Mammary epithelial cell (primary cell): ENCODE measurements at regions of chr9 and their contacts with region 1.

Region 1: GRCh38 chr9:12813960-12814876 is 39.4 kb downstream of the LURAP1L start:
- DNase-seq: peak; percentile 99
- H3K4me3 ChIP-seq: peak overlapping the region; percentile 48 to 67 (median 50)
- H3K27ac ChIP-seq: peak overlapping the region; percentile 100
- H3K4me1 ChIP-seq: peaks cover 58% of the 10 kb centered on the region
- H3K27me3 ChIP-seq: no peaks in the 10 kb centered on the region
- CTCF ChIP-seq: peak in 1 of 2 donors; percentile 39

Region 2: GRCh38 chr9:12732971-12733370 is 81.2 kb before region 1 on chr9:
- CTCF ChIA-PET with region 1: no interaction called
- dilution Hi-C with region 1: no loop called
- in situ Hi-C with region 1: no loop called
- intact Hi-C with region 1: no loop called
- DNase-seq: no peak
- H3K4me3 ChIP-seq: no peak overlapping the region
- H3K27ac ChIP-seq: no peak overlapping the region
- H3K4me1 ChIP-seq: no peaks in the 10 kb centered on the region
- H3K27me3 ChIP-seq: no peaks in the 10 kb centered on the region
- CTCF ChIP-seq: no peak

Region 3: DNA sequence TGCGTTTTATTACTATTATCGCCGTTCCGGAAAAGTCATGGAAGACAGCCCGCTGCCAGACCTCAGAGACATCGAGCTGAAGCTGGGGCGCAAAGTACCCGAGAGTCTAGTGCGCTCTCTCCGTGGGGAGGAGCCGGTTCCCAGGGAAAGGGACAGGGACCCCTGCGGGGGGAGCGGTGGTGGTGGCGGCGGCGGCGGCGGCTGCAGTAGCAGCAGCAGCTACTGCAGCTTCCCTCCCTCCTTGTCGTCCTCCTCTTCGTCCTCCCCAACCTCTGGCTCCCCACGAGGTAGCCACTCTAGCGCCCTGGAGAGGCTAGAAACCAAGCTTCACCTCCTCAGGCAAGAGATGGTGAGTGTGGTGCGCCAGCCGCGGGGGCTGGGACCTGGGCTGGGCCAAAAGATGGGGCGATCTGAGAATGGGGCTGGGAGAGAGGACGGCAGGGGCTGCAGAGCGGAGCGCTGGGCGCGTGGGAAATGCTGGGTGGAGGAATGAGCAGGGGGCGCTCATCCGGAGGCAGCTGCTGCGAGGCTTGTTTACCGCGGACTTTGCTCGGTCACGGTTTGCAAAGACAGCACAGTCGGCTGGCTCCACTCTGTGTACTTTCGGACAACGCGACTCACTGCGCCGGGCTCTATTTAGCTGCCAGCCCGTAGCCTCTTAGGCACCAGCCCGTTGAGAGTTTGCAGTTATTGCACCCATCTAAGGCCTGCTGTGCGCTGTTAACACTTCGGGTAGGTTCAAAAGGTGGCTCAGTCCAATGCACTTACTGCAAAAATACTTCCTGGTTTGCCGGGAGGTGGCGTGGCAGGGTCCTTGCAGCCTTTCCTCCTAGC is 38.3 kb before region 1 on chr9:
- CTCF ChIA-PET with region 1: interaction called, 4 read pairs
- dilution Hi-C with region 1: no loop called
- in situ Hi-C with region 1: loop called (anchors 5 kb)
- intact Hi-C with region 1: loop called (anchors 1 kb)
- DNase-seq: peak; percentile 88
- H3K4me3 ChIP-seq: peak overlapping the region; percentile 74 to 87 (median 84)
- H3K27ac ChIP-seq: peak overlapping the region; percentile 89
- H3K4me1 ChIP-seq: peaks cover 15% of the 10 kb centered on the region
- H3K27me3 ChIP-seq: no peaks in the 10 kb centered on the region
- CTCF ChIP-seq: peak; percentile 32 to 63

Region 4: GRCh38 chr9:12849486-12850004 is 35.3 kb after region 1 on chr9:
- CTCF ChIA-PET with region 1: no interaction called
- dilution Hi-C with region 1: loop called (anchors 5 kb)
- in situ Hi-C with region 1: no loop called
- intact Hi-C with region 1: no loop called
- DNase-seq: no peak
- H3K4me3 ChIP-seq: no peak overlapping the region
- H3K27ac ChIP-seq: no peak overlapping the region
- H3K4me1 ChIP-seq: peaks cover 11% of the 10 kb centered on the region
- H3K27me3 ChIP-seq: no peaks in the 10 kb centered on the region
- CTCF ChIP-seq: no peak

Region 5: GRCh38 chr9:12884737-12885414 is 70.7 kb after region 1 on chr9:
- CTCF ChIA-PET with region 1: no interaction called
- dilution Hi-C with region 1: no loop called
- in situ Hi-C with region 1: no loop called
- intact Hi-C with region 1: loop called (anchors 2 kb)
- DNase-seq: peak; percentile 77
- H3K4me3 ChIP-seq: no peak overlapping the region
- H3K27ac ChIP-seq: no peak overlapping the region
- H3K4me1 ChIP-seq: no peaks in the 10 kb centered on the region
- H3K27me3 ChIP-seq: no peaks in the 10 kb centered on the region
- CTCF ChIP-seq: peak; percentile 61 to 71

Region 6: DNA sequence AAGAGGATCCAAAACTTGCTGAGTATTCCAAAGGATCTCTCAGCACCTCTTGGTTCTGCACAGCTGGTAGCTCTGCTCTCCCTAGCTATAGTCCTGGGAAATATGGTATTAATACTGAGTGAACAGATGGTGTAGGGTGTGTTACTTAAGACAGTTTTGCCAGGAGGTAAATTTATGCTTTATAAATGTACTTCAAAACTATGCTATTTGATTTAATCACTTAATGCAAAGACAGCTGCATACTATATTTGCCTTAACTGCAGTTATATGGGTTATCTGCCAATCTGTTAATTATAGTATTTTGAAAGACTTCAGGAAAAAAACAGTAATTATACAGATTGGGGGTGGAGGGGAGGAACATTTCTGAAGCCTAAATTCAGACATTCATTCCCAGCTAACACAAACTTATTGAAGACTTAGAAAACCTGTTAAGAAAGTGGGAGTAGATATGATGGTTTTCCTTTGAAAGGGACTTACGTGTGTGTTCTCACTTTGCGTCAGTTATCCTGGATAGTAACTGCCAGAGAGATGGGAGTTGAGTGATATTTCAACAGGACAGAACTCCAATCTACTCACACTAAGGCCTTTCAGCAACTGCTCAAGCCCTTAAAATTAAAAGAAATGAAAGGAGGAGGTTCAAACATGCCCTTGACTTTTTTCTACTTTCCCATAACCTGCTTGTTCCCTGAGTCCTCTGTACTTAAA is 249.9 kb after region 1 on chr9:
- CTCF ChIA-PET with region 1: no interaction called
- dilution Hi-C with region 1: no loop called
- in situ Hi-C with region 1: no loop called
- intact Hi-C with region 1: no loop called
- DNase-seq: no peak
- H3K4me3 ChIP-seq: no peak overlapping the region
- H3K27ac ChIP-seq: no peak overlapping the region
- H3K4me1 ChIP-seq: no peaks in the 10 kb centered on the region
- H3K27me3 ChIP-seq: peaks cover 3% of the 10 kb centered on the region
- CTCF ChIP-seq: no peak